Ascending aorta (tissue), 2 donors: ENCODE measurements at regions of chr11 and their contacts with region 1.

Region 1: GRCh38 chr11:61602775-61603569 is 22.1 kb upstream of the SYT7 start:
- DNase-seq: peak; percentile 37 to 84
- H3K4me3 ChIP-seq: no peak overlapping the region
- H3K27ac ChIP-seq: peak overlapping the region in 1 of 2 donors; percentile 32
- H3K4me1 ChIP-seq: peaks cover 0 to 6% of the 10 kb centered on the region in 2 donors
- H3K27me3 ChIP-seq: no peaks in the 10 kb centered on the region
- CTCF ChIP-seq: no peak

Region 2: DNA sequence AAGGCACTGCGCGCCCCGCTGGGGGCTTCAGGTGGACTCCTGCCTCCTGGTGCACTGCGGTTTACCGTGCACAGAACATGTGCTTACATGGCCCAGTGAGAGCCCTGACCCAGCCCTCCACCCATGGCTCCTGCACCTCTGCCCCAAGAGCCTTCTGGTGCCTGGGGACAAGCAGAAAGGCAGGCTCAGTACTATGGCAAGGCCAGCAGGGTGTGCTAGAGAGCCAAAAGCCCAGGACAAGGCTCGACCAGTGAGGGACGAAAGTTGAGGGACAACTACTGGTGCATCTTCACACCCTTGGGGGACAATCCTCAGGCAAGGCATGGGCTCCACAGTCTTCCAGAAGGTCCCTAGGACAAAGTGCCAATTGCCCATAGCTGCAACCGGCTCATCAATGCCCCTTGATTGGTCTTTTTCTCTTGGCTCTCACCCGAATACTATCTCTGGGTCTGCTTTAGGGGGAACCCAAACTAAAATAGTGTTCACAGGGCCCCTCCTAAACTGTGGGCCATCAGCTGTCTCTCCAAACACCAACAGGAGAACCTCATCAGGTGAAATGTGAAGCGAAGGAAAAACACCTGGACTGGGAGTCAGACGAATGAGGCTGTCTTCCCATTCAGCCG is 348.5 kb before region 1 on chr11:
- intact Hi-C with region 1: no loop called
- DNase-seq: no peak
- H3K4me3 ChIP-seq: no peak overlapping the region
- H3K27ac ChIP-seq: no peak overlapping the region
- H3K4me1 ChIP-seq: no peaks in the 10 kb centered on the region
- H3K27me3 ChIP-seq: no peaks in the 10 kb centered on the region
- CTCF ChIP-seq: peak; percentile 41 to 65 (median 56)

Region 3: GRCh38 chr11:61581030-61581928 is 21.7 kb before region 1 on chr11 and contains the start of gene SYT7:
- intact Hi-C with region 1: loop called (anchors 1 kb)
- DNase-seq: peak; percentile 73 to 97
- H3K4me3 ChIP-seq: peak within 1 kb of the TSS; percentile 65 to 72
- H3K27ac ChIP-seq: peak within 1 kb of the TSS in 1 of 2 donors; percentile 55
- H3K4me1 ChIP-seq: peaks cover 6 to 14% of the 10 kb centered on the region in 2 donors
- H3K27me3 ChIP-seq: peaks cover 10% of the 10 kb centered on the region
- CTCF ChIP-seq: peak in 1 of 3 experiments; percentile 38
- total RNA-seq, gene SYT7: 1.8 TPM